ENCODE measurements at regions of chr6 and their contacts with region 1.

Region 1: DNA sequence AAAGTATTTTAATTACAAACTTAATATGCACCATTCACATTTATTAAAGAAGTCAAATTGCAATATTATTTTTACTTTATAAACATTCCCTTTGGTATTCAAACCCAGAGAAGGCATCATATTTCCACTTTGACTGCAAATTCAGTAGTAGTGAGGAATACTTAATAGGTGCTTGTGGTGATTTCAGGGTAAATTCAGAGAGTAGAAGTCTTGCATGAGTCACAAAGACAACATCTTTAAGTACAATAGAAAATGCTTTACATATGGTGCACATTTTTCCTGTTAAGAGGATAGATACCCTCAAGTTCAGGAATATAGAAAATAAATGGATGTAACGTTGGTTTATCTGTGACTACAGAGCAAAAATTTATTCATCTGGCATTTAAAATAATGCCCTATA is 390.2 kb downstream of the TENT5A start:
- DNase-seq: no peak
- H3K4me3 ChIP-seq: no peak overlapping the region
- H3K27ac ChIP-seq: no peak overlapping the region
- H3K4me1 ChIP-seq: no peaks in the 10 kb centered on the region
- H3K27me3 ChIP-seq: no peaks in the 10 kb centered on the region
- CTCF ChIP-seq: no peak
- POLR2A ChIP-seq: no peak

Region 2: DNA sequence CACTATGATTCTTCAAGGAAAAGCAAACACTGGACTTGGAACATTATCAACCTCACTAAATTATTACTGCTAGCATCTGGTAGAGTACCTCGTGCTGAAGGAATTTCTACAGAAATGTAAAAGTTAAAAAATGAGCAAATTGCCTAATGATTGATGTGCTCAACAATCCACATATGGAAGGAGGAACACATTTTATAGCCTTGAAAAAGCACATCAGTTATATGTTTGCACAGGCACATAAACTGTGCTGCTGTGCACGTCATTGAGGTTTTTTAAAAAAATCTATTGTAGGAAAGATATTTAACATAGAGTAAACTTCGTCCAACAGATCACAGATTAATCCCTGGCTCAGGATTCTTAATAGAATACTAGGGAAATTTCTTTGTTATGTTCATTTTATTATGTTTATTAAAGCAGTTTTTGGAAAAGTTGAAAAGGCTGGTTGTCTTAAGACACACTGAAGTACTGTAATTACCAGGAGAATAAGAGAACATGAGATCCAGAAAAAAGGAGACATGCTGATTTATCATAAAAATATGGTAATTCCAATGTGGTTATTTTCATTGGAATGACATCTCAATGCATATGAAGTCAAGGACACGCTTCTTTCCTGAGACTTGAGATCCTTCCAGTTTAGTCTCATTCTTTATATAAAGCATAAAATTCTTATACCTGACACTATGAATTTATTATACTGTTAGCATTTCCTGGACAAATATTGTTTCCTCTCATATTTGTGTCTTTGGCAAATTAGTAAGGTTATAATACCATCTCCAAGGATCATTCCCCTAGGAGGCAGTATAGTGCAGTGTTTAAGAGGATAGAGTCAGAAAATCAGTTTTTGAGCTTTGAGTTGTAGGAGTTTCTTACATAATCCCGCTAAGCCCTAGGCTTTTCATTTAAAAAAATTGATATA is 120.9 kb before region 1 on chr6:
- intact Hi-C with region 1: no loop called
- DNase-seq: no peak
- H3K4me3 ChIP-seq: no peak overlapping the region
- H3K27ac ChIP-seq: no peak overlapping the region
- H3K4me1 ChIP-seq: no peaks in the 10 kb centered on the region
- H3K27me3 ChIP-seq: no peaks in the 10 kb centered on the region
- CTCF ChIP-seq: no peak
- POLR2A ChIP-seq: no peak

Region 3: GRCh38 chr6:81298751-81299150 is 63.5 kb before region 1 on chr6:
- intact Hi-C with region 1: loop called (anchors 2 kb)
- DNase-seq: no peak
- H3K4me3 ChIP-seq: no peak overlapping the region
- H3K27ac ChIP-seq: no peak overlapping the region
- H3K4me1 ChIP-seq: no peaks in the 10 kb centered on the region
- H3K27me3 ChIP-seq: no peaks in the 10 kb centered on the region
- CTCF ChIP-seq: no peak
- POLR2A ChIP-seq: no peak